ENCODE measurements at regions of chr2 and their contacts with region 1.

Region 1: DNA sequence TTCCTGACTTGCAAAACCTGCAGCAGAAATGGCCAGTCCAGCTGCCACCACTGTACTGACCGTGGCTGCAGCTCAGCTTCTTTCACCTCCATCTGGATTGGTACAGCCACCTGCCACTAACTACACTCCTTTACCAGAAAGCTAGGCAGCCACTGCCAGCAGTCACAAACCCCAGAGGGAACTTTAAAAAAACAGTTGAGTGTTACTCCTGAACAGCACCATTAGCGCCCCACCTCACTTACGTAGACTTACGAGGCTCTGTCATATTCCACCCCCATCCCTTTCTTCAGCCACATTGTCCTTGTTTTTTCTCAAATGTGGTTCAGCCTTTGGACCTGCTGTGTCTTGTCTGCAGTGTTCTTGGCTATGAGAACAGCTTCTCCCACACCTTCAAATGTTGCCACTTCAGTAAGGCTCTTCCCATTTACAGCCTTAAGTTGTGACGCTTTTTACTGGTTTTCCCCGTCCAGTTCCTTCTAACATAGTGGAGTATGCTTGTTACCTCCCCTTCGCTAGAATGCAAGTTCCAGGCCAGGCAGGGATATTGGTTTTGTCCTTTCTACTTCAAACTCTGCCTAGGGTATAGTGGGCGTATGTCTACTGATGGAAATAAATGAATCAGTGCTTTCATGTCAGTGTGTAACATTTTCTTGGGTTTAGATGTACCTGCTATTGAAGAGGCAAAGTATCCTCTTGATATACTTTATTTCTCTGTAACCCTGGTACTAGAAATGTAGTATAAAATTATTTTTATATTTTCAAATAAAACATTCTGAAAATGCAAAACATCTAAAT is 17.1 kb downstream of the HNRNPA3 start:
- DNase-seq: no peak
- H3K4me3 ChIP-seq: no peak overlapping the region
- H3K27ac ChIP-seq: no peak overlapping the region
- H3K27me3 ChIP-seq: no peaks in the 10 kb centered on the region
- CTCF ChIP-seq: no peak

Region 2: GRCh38 chr2:177353187-177353478 is 123.5 kb after region 1 on chr2:
- CTCF ChIA-PET with region 1: no interaction called
- POLR2A ChIA-PET with region 1: interaction called, 11 read pairs
- DNase-seq: no peak
- H3K4me3 ChIP-seq: no peak overlapping the region
- H3K27ac ChIP-seq: no peak overlapping the region
- H3K27me3 ChIP-seq: no peaks in the 10 kb centered on the region
- CTCF ChIP-seq: no peak

Region 3: DNA sequence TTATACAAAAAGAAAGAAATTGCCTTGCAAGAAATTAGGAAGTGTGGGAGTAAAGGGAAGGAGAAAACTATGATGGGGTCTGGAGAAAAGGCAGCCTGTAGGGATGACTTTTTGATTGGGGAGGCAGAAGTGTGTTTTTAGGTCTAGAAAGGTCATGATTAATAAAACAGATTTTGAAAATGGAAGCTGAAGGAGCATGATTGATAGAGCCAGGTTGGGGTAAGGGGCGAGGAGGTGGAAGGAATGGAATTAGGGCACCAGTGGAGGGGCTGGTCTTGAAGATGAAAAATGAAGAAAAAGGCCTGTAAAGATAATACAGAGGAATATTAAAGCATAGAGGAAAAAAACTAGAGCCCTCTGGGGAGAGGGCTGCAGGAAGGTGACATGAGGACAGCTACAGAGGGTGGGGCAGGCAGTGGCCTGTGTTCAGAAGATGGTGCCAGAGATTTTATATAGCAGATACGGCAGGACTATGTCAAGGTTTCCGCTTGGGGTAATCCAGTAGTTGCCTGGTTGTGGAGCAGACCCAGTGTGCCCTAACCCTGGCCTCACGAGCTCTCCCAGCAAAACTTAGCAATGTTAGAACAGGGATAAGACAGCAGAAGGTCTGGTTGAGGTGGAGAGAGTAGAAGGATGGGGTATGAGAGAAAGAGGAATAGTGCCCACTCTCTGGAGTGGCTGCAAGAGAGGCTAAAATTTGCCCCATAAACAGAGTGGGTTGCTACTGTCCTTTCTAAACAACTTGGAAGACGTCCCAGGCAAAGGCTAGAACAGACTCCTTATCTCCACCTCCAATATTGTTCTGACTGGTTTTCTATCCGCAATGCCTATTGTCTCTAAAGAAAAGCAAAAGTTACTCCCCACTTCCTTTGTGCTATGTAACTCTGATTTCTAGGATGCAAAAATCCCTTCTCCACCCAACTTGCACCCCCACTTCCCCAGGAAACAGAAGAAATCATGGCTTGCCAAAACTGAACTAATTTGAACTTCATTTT is 450.3 kb after region 1 on chr2:
- CTCF ChIA-PET with region 1: no interaction called
- POLR2A ChIA-PET with region 1: no interaction called
- DNase-seq: no peak
- H3K4me3 ChIP-seq: no peak overlapping the region
- H3K27ac ChIP-seq: no peak overlapping the region
- H3K27me3 ChIP-seq: no peaks in the 10 kb centered on the region
- CTCF ChIP-seq: no peak

Measured in AG04450 (cell line).